Activated B cell treated with CpG ODN at 0.5 μM for 24 hours (primary cell): ENCODE measurements at regions of chr19 and their contacts with region 1.

Region 1: DNA sequence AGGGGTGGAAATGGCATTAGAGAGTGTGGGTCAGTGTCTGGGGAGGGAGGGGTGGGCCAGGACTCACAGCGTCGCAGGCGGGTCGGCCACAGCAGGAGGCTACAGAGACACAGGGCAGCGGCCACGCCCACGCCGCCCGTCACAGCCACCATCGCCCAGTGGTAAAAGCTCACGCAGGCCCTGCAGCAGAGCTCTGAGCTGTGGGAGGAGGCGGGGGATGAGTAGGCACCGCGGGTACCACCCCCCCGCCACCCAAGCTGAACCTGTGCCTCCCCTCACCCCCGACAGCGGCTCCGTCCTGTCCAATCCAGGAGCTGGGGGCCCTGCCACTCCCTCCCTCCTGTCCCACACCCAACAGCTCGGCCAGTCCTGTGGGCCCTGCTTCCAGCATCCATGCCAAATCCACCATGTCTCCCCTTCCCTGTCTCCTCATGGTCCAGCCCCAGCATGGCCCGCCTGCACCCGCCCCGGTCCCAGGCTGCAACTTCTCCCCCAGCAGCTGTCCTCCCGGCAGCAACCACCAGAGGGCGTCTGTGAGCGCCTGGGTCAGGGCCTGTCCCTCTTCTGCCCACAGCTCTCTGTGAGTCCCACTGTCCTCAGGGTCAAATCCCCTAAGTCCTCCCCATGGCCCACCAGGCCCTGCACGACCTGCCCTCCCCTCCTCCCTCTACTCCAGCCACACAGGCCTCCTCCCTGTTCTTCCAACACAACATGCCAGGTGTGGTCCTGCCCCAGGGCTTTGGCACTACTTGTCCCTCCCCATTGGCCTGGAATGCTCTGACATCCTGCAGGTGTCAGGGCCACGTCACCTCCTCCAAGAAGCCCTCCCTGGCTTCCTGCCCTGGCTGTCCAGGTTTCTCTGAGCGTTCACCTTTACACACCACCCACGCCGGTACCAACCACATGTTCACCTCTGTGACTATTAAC is 6.0 kb downstream of the TEKTIP1 start:
- DNase-seq: peak; percentile 84
- ATAC-seq: peak; percentile 80
- H3K4me3 Mint-ChIP-seq: no peak overlapping the region
- H3K27ac Mint-ChIP-seq: no peak overlapping the region
- H3K4me1 Mint-ChIP-seq: peaks cover 7% of the 10 kb centered on the region
- H3K27me3 Mint-ChIP-seq: no peaks in the 10 kb centered on the region
- CTCF ChIP-seq: peak; percentile 30

Region 2: GRCh38 chr19:3557461-3558248 is 12.7 kb after region 1 on chr19 and contains the start of gene MFSD12:
- CTCF ChIA-PET with region 1: interaction called, 37 read pairs
- POLR2A ChIA-PET with region 1: interaction called, 13 read pairs
- intact Hi-C with region 1: loop called (anchors 2 kb)
- DNase-seq: peak; percentile 94
- ATAC-seq: peak; percentile 86
- H3K4me3 Mint-ChIP-seq: peak within 1 kb of the TSS; percentile 89
- H3K27ac Mint-ChIP-seq: peak within 1 kb of the TSS; percentile 86
- H3K4me1 Mint-ChIP-seq: peaks cover 57% of the 10 kb centered on the region
- H3K27me3 Mint-ChIP-seq: no peaks in the 10 kb centered on the region
- CTCF ChIP-seq: no peak
- total RNA-seq, gene MFSD12: 59.2 and 76.9 TPM in 2 replicates

Region 3: DNA sequence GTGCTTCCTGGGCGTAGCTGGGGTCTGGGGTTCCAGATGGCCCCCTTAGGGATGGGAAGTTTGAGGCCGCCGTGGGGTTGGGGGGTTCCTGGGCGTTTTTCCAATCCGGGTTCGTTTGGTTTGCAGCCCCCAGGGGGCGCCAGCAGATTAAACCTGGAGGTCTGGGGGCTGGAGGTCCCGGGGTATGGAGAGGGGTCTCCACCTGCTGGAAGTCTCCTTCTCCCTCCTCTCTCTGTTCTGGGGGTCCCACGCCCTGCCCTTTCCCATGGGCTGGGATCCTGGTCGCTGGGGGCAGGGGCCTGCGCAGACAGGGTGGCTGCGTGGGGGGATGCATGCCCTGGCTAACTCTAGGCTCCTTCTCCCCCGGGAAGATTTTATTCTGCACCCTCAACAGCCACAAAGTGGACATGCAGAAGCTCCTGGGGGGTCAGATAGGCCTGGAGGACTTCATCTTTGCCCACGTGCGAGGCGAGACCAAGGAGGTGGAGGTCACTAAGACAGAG is 41.2 kb after region 1 on chr19:
- CTCF ChIA-PET with region 1: interaction called, 15 read pairs
- POLR2A ChIA-PET with region 1: no interaction called
- intact Hi-C with region 1: no loop called
- DNase-seq: peak; percentile 46
- ATAC-seq: peak; percentile 45
- H3K4me3 Mint-ChIP-seq: peak overlapping the region; percentile 48
- H3K27ac Mint-ChIP-seq: no peak overlapping the region
- H3K4me1 Mint-ChIP-seq: no peaks in the 10 kb centered on the region
- H3K27me3 Mint-ChIP-seq: peaks cover 2% of the 10 kb centered on the region
- CTCF ChIP-seq: peak; percentile 45

Region 4: GRCh38 chr19:3618144-3618810 is 73.3 kb after region 1 on chr19:
- CTCF ChIA-PET with region 1: interaction called, 9 read pairs
- POLR2A ChIA-PET with region 1: interaction called, 8 read pairs
- intact Hi-C with region 1: loop called (anchors 1 kb)
- DNase-seq: peak; percentile 65
- ATAC-seq: peak; percentile 81
- H3K4me3 Mint-ChIP-seq: no peak overlapping the region
- H3K27ac Mint-ChIP-seq: no peak overlapping the region
- H3K4me1 Mint-ChIP-seq: peaks cover 14% of the 10 kb centered on the region
- H3K27me3 Mint-ChIP-seq: no peaks in the 10 kb centered on the region
- CTCF ChIP-seq: peak; percentile 34

Region 5: DNA sequence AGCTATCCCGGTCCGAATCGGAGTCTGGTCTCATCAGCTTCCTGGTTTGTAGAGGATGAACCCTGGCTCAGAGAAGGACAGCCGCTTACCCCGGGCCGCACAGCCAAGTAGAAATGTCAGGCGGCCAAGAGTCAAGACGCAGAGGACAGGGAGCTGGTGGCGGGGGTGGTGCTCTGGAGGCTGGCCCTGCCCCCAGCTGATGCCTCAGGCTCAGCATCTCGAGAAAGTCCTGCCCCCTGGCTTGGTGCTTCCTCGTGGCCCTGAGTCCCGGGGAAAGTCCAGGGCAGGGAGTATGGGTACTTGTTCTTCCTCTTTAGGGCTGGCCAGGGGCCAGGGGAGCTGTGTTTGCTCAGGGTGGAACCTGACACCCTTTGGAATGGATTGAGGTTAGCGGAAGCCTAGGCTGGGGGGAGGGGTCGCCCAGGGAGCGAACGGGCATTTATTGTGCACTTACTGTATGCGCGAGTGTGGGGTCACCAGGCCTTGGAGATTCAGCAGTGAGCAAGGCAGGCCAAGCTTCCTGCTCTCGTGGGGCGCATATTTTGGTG is 165.3 kb after region 1 on chr19:
- CTCF ChIA-PET with region 1: interaction called, 8 read pairs
- POLR2A ChIA-PET with region 1: no interaction called
- intact Hi-C with region 1: loop called (anchors 1 kb)
- DNase-seq: no peak
- ATAC-seq: no peak
- H3K4me3 Mint-ChIP-seq: no peak overlapping the region
- H3K27ac Mint-ChIP-seq: no peak overlapping the region
- H3K4me1 Mint-ChIP-seq: peaks cover 6% of the 10 kb centered on the region
- H3K27me3 Mint-ChIP-seq: peaks cover 8% of the 10 kb centered on the region
- CTCF ChIP-seq: no peak